ENCODE measurements at regions of chr6 and their contacts with region 1.

Region 1: DNA sequence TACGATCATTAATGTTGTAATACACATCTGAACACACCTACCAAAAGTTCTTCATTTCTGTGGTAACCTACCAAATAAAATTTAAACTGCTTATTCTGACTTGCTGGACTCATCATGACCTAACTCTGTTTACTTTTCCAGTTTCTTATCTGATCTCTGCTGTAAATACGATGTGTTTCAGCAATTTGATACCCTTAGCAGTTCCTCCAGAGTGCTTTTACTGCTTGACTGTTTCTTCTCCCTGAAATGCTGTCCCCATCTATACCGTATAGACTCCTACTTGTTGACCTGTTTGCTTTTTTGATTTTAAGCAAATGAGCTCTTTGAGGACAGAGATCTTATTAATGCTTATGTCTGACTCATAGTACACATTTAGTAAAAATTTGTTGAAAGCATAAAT is 119.5 kb downstream of the SCAF8 start:
- DNase-seq: no peak
- CTCF ChIP-seq: no peak

Region 2: GRCh38 chr6:154868143-154868594 is 15.5 kb after region 1 on chr6:
- CTCF ChIA-PET with region 1: interaction called, 13 read pairs
- POLR2A ChIA-PET with region 1: no interaction called
- DNase-seq: no peak
- CTCF ChIP-seq: peak; percentile 40